ENCODE measurements at regions of chr11 and their contacts with region 1.

Region 1: DNA sequence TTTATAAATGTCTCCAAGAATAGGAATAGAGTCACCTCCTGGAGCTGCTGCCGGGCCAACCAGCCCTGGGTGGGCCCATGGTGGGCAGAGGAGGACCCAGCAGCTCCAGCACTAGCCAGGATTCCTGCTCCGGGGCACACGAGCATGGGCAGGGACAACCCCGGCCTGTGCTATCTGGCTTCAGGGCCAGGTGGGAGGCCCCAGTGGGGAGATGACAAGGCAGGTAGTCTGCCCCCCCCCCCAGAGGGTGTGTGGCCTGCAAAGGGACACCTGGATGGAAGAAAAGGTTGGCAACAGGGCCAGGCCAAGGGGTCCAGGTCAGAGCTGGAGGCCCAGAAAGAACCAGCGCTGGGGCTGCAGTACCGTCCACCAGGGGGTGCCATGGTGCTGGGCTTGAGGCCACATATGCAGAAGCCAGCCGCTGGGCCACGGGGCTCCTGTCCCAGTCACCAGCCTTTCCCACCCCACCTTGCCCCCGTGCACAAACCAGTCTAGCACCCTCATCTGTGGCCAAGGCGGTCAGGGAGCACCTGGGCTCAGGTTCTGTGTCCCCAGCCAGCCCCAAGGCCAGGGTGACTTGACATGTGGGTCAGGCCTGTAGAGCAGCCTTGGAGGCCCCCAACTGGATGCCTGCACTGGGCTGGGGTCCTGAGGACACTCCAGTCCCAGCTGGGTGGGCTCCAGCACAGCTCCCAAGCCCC is 3.5 kb downstream of the TSPAN32 start:
- DNase-seq: peak; percentile 38 to 96
- H3K4me3 ChIP-seq: no peak overlapping the region
- H3K27ac ChIP-seq: no peak overlapping the region
- H3K4me1 ChIP-seq: peaks cover 0 to 3% (median 0%) of the 10 kb centered on the region in 4 experiments; a peak in 1 of 7 replicates
- H3K27me3 ChIP-seq: no peaks in the 10 kb centered on the region
- CTCF ChIP-seq: peak; percentile 89 to 94 (median 94)
- EP300 ChIP-seq: no peak
- POLR2A ChIP-seq: no peak
- RAD21 ChIP-seq: peak; percentile 89 to 91

Region 2: DNA sequence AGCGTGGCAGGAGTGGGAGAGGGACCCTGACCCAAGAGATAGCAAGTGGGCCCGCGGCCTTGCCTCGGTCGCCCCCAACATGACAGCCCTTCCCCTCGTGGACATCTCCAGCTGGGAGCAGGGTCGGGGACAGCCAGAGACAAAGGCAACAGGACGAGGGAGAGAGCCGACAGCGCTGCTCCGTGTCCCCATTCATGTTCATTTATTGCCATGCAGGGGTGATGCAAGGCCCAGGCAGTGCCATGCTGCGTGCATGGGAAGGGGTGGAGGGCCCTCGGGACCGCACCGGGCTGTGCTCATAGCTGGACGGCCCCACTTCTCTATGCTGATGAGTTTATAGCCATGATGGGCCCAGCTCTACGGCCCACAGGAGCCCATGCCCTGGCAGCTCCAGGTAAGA is 345.5 kb before region 1 on chr11:
- CTCF ChIA-PET with region 1: no interaction called
- POLR2A ChIA-PET with region 1: no interaction called
- DNase-seq: no peak
- H3K4me3 ChIP-seq: no peak overlapping the region
- H3K27ac ChIP-seq: no peak overlapping the region
- H3K4me1 ChIP-seq: no peaks in the 10 kb centered on the region
- H3K27me3 ChIP-seq: no peaks in the 10 kb centered on the region
- CTCF ChIP-seq: no peak
- EP300 ChIP-seq: no peak
- POLR2A ChIP-seq: no peak
- RAD21 ChIP-seq: no peak

Region 3: DNA sequence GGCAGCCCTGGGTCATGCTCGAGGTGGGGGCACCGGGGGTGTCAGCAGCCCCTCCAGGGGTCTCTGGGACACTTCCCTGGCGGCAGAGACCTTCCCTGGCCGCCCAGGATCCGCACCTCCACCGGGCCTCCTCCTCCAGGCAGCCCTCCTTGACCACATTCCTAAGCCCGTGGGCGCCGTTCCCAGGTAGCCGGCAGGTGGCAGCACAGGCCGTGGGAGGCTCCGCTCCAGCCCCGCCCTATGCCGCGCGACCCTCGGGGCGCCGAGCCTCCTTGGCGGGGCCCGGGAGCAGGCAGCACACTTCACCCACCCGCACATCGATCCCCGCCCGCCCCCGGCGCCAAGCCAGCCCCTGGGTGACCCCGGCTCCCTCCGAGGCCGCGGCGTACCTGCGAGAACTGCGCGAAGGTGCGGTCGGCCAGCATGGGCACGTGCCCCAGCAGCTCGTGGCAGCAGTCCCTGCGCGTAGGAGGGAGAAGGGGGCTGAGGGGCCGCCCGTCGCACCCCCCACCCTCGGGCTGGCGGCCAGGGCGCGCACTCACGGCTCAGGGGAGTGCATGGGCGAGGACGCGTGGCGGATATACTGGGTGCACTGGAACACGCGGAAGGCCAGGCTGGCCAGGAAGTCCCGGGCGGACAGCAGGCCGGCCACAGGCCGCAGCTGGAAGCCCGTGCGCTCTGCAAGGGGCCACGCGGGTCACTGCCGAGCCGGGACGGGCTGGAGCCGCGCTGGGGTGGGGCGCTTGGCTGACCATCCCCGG is 139.0 kb before region 1 on chr11:
- CTCF ChIA-PET with region 1: interaction called, 16 read pairs
- POLR2A ChIA-PET with region 1: interaction called, 3 read pairs
- DNase-seq: peak in 1 of 2 experiments; percentile 90
- H3K4me3 ChIP-seq: peak overlapping the region in 1 of 4 experiments; percentile 35; a peak in 1 of 8 replicates
- H3K27ac ChIP-seq: no peak overlapping the region
- H3K4me1 ChIP-seq: peaks cover 0 to 6% (median 1%) of the 10 kb centered on the region in 4 experiments; a peak in 2 of 7 replicates
- H3K27me3 ChIP-seq: peaks cover 0 to 14% (median 0%) of the 10 kb centered on the region in 4 experiments; a peak in 3 of 7 replicates
- CTCF ChIP-seq: peak in 2 of 3 experiments; percentile 76 to 77; a peak in 3 of 4 replicates
- EP300 ChIP-seq: no peak
- POLR2A ChIP-seq: no peak
- RAD21 ChIP-seq: peak; percentile 54 to 75

Region 4: DNA sequence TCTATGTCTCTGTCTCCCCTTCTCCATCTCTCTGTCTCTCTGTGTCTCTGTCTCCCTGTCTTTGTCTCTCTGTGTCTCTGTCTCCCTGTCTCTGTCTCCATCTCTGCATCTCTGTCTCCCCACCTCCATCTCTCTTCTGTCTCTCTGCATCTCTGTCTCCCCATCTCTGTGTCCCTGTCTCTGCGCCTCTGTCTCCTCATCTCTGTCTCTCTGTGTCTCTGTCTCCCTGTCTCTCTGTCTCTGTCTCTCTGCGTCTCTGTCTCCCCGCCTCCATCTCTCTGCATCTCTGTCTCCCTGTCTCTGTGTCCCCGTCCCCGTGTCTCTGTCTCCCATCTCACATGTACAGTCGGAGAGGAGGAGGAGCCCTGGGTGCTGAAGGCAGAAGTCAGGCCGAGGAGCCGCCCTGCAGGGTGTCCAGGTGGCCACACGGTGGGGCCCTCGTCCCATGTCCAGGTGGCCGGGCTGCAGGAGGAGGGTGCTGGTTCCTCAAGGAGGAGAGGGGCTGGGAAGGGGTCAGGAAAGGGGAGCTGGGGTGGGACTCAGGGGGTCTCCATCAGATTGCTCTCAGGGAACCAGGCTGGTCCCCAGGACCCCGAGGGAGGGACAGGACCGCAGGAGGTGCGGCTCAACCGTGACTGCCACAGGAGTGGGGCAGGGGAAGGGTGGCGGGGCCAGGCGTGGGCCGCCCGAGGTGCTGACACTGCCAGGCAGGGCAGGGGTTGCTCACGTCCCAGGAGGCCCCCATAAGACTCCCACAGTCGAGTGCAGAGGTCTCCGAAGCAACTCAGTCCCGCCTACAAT is 108.1 kb before region 1 on chr11:
- CTCF ChIA-PET with region 1: interaction called, 248 read pairs
- POLR2A ChIA-PET with region 1: no interaction called
- DNase-seq: peak; percentile 41 to 88
- H3K4me3 ChIP-seq: no peak overlapping the region
- H3K27ac ChIP-seq: no peak overlapping the region
- H3K4me1 ChIP-seq: no peaks in the 10 kb centered on the region
- H3K27me3 ChIP-seq: no peaks in the 10 kb centered on the region; a peak in 1 of 7 replicates
- CTCF ChIP-seq: peak; percentile 88 to 99 (median 97)
- EP300 ChIP-seq: no peak
- POLR2A ChIP-seq: no peak
- RAD21 ChIP-seq: peak; percentile 96 to 99

Region 5: GRCh38 chr11:2358754-2359442 is 53.6 kb after region 1 on chr11:
- CTCF ChIA-PET with region 1: interaction called, 10 read pairs
- POLR2A ChIA-PET with region 1: no interaction called
- DNase-seq: no peak
- H3K4me3 ChIP-seq: no peak overlapping the region
- H3K27ac ChIP-seq: no peak overlapping the region
- H3K4me1 ChIP-seq: no peaks in the 10 kb centered on the region
- H3K27me3 ChIP-seq: no peaks in the 10 kb centered on the region
- CTCF ChIP-seq: no peak
- EP300 ChIP-seq: no peak
- POLR2A ChIP-seq: no peak
- RAD21 ChIP-seq: no peak

Region 6: GRCh38 chr11:2400069-2400760 is 94.9 kb after region 1 on chr11 and contains the start of gene TSSC4:
- CTCF ChIA-PET with region 1: interaction called, 64 read pairs
- POLR2A ChIA-PET with region 1: interaction called, 14 read pairs
- DNase-seq: peak; percentile 100
- H3K4me3 ChIP-seq: peak within 1 kb of the TSS; percentile 86 to 98 (median 97)
- H3K27ac ChIP-seq: peak within 1 kb of the TSS; percentile 78
- H3K4me1 ChIP-seq: peaks cover 0 to 17% (median 6%) of the 10 kb centered on the region in 4 experiments; a peak in 5 of 7 replicates
- H3K27me3 ChIP-seq: no peaks in the 10 kb centered on the region
- CTCF ChIP-seq: peak in 2 of 3 experiments; percentile 92 to 100; a peak in 3 of 4 replicates
- EP300 ChIP-seq: no peak
- POLR2A ChIP-seq: peak in 1 of 2 experiments; percentile 61; a peak in 1 of 3 replicates
- RAD21 ChIP-seq: peak; percentile 74 to 76
- total RNA-seq, gene TSSC4: 39.3 and 44.3 TPM in 2 replicates

Region 7: GRCh38 chr11:2428322-2428795 is 123.1 kb after region 1 on chr11:
- CTCF ChIA-PET with region 1: interaction called, 333 read pairs
- POLR2A ChIA-PET with region 1: interaction called, 3 read pairs
- DNase-seq: peak in 1 of 2 experiments; percentile 93
- H3K4me3 ChIP-seq: no peak overlapping the region
- H3K27ac ChIP-seq: no peak overlapping the region
- H3K4me1 ChIP-seq: no peaks in the 10 kb centered on the region
- H3K27me3 ChIP-seq: peaks cover 0 to 10% (median 0%) of the 10 kb centered on the region in 4 experiments; a peak in 1 of 7 replicates
- CTCF ChIP-seq: peak in 2 of 3 experiments; percentile 94 to 97; a peak in 3 of 4 replicates
- EP300 ChIP-seq: no peak
- POLR2A ChIP-seq: no peak
- RAD21 ChIP-seq: peak; percentile 99

Region 8: DNA sequence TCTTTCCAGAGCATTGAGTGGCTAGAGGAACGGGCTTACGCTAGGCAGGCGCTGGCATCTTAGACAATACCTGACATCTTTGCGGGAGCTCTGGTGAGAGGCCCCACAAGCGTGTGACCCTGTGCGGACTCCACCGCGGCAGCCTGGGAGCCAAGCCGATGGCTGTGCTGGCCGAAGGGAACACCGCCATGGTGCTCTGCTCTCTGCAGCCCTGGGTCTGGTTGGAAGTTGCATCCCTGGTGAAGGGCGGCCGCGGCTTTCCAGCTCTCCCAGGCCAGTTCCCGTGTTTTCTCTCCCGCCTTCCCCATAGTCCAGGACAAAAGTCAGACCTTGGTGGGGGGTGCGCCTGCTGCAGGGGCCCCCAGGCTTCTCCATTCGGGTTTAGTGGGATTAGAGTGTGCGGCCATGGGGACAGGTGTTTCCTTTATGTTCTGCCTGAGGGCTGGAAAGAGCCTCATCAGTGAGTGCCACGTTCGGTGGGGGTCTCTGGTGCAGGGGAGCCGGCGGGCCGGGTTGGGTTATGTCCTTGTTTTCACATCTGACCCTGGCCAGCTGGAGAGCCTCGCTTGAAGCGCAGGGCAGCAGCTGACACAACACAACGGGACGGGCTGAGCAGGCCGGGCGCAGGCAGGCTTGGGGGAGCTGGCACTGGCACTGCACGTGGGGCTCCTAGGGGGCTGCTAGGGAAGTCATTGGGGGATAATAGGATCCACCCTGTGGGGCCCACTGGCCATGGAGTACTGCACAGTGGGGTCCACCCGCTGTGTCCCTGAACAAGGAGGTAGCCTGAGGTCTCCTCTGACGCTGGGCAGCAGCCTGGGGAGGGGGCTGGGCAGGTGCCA is 234.3 kb after region 1 on chr11:
- CTCF ChIA-PET with region 1: no interaction called
- POLR2A ChIA-PET with region 1: no interaction called
- DNase-seq: no peak
- H3K4me3 ChIP-seq: no peak overlapping the region
- H3K27ac ChIP-seq: no peak overlapping the region
- H3K4me1 ChIP-seq: peaks cover 0 to 3% (median 0%) of the 10 kb centered on the region in 4 experiments; a peak in 2 of 7 replicates
- H3K27me3 ChIP-seq: peaks cover 1 to 68% (median 37%) of the 10 kb centered on the region in 4 experiments
- CTCF ChIP-seq: no peak
- EP300 ChIP-seq: no peak
- POLR2A ChIP-seq: no peak
- RAD21 ChIP-seq: no peak